ENCODE measurements at regions of chr1 and their contacts with region 1.

Region 1: DNA sequence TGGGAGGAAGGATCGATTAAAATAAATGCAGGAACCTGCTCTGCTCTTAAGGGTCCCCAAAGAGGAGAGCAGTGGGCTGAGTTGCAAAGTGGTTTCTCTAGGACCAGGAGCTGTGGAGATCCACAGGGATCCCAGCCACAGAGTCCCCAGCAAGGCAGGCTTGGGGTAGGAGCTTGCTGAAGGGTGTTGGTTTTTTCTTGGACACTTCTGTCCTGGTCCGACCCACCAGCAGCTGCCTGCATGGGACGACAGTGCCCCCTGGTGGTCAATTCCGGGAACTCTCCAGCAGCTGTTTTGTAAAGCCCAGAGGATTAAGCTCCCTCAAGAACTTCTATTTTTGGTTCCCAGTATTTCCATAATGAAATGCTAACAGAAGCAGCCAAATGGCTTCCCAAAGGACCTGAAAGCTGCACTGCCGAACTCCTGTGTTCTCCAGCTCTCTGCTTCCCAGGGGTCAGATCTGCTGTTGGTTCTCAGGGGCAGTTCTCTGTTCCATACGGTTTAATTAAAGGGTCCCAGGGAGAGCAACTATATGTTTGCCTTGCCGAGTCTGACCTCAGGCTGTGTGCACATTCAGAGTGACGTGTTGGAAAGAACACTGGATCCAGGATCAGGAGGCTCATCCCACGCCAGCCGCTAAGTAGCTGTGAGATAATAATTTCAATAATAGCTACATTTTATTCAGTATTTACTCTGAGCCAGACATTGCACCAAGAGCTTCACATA is 23.2 kb downstream of the NENF start:
- DNase-seq: peak; percentile 47
- H3K4me3 ChIP-seq: peak overlapping the region; percentile 20; the same call in 1 of the 2 replicates
- CTCF ChIP-seq: peak; percentile 92

Region 2: GRCh38 chr1:212012034-212012740 is 443.8 kb before region 1 on chr1:
- CTCF ChIA-PET with region 1: interaction called, 10 read pairs
- POLR2A ChIA-PET with region 1: no interaction called
- DNase-seq: no peak
- H3K4me3 ChIP-seq: no peak overlapping the region
- CTCF ChIP-seq: peak; percentile 94

Region 3: GRCh38 chr1:212082765-212083406 is 373.1 kb before region 1 on chr1:
- CTCF ChIA-PET with region 1: interaction called, 11 read pairs
- POLR2A ChIA-PET with region 1: no interaction called
- DNase-seq: no peak
- H3K4me3 ChIP-seq: no peak overlapping the region
- CTCF ChIP-seq: no peak

Region 4: DNA sequence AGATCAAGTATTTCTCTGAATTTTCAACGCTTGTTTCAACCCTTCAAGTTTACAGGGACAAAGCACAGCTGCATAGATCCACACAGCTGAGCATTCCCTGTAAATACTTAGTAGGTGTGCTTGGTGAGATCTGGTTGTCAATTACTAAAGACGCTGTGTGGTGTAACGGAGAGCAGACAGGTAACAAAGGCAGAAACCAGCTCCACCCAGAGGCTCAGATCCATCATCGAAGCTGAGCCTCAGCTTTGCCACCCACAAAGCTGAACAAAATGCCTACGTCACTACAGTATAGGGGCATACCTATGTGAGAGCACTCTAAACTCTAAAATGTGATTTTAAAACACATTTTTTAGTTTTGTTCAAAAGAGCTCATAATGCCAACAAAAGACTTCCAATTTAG is 80.0 kb before region 1 on chr1:
- CTCF ChIA-PET with region 1: interaction called, 14 read pairs
- POLR2A ChIA-PET with region 1: no interaction called
- DNase-seq: no peak
- H3K4me3 ChIP-seq: no peak overlapping the region
- CTCF ChIP-seq: no peak

Region 5: DNA sequence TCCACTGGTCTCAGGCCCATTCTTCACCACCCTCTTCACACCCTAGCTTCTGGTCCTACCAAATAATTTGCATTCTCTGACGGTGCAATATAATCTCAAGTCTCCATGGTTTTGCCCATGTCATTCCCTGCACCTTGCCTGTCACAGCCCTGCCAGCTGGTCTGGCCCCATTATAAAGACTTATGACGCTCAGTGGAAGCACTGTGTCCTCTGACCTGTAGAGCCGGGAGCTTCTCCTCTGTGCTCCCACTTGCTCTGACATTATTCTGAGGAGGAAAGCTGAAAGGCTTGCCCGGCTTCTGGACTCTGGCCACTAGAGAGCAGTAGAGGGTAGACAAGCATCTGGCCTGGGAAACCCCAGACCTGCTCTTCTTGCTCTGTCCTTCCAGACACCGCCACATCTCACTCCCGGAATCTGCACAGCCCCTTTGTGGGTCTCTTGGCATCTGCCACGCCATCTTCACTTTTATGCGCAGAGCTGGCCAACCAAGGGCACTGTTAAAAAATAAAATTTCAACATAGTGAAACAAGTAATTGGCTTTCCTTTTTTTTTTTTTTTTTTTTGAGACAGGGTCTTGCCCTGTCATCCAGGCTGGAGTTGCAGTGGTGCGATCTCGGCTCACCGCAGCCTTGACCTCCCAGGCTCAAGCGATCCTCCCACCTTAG is 21.2 kb after region 1 on chr1:
- CTCF ChIA-PET with region 1: interaction called, 59 read pairs
- POLR2A ChIA-PET with region 1: no interaction called
- DNase-seq: peak; percentile 38
- H3K4me3 ChIP-seq: no peak overlapping the region
- CTCF ChIP-seq: peak; percentile 91

Measured in AG04449 (cell line).